AG04449 (cell line): ENCODE measurements at regions of chr9 and their contacts with region 1.

Region 1: DNA sequence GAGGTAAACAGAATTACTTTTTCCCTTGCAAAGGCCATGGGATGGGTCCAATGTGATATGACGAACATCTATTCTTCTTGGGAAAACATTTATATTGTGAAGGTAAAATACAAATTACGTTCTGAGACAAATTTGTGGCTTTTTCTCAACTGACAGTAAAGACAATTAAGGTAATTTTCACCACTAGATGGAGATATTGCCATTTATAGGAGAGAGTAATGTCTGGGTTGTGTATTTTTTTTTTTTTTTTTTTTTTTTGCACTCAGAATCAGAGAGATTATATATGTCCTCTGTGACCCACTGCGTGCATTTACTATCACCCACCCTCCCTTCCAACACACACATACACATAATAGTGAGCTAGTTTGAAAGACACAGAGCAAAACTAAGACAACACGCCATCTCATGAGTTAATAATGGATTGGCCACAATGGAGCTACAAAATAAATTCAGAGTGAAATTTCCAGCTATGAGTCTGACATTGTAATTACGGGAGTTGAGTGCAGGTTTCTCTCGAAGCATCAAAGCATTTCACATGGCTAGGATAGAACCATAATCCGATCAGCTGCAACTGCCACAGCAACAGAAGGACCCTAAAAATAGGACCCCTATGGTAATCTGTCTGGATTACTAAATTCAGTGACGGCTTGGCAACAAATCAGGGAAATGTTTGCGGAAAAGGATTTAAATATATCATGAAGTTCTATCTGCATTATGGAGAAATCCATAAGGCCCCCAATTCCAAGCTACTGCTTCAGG is 49.2 kb downstream of the ANXA1 start:
- DNase-seq: no peak
- H3K4me3 ChIP-seq: no peak overlapping the region
- CTCF ChIP-seq: peak; percentile 12

Region 2: DNA sequence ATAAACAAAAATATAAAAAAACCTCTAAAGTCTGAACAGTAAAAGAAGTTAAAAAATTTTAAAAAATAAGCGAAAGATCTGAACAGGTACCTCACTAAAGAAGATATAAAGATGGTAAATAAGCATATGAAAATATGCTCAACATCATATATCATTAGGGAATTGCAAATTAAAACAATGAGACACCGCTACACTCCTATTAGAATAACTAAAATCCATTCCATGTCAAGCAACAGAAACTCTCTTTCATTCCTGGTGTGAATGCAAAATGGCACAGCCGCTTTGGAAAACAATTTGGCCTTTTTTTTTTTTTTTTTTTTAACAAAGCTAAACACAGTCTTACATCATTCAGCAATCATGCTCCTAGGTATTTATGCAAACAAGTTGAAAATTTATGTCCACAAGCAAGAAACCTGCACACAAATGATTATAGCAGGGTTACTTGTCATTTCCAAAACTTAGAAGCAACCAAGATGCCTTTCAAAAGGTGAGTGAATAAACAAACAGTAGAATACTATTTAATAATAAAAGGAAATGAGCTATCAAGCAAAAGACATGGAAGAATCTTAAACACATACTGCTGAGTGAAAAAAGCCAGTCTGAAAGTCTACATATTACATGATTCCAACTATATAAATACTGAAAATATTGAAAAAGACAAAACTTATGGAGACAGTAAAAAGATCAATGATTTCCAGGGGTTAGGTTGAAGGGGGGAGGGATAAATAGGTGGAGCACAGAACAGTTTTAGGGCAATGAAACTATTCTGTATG is 27.1 kb before region 1 on chr9:
- CTCF ChIA-PET with region 1: no interaction called
- POLR2A ChIA-PET with region 1: no interaction called
- DNase-seq: no peak
- H3K4me3 ChIP-seq: no peak overlapping the region
- CTCF ChIP-seq: no peak

Region 3: DNA sequence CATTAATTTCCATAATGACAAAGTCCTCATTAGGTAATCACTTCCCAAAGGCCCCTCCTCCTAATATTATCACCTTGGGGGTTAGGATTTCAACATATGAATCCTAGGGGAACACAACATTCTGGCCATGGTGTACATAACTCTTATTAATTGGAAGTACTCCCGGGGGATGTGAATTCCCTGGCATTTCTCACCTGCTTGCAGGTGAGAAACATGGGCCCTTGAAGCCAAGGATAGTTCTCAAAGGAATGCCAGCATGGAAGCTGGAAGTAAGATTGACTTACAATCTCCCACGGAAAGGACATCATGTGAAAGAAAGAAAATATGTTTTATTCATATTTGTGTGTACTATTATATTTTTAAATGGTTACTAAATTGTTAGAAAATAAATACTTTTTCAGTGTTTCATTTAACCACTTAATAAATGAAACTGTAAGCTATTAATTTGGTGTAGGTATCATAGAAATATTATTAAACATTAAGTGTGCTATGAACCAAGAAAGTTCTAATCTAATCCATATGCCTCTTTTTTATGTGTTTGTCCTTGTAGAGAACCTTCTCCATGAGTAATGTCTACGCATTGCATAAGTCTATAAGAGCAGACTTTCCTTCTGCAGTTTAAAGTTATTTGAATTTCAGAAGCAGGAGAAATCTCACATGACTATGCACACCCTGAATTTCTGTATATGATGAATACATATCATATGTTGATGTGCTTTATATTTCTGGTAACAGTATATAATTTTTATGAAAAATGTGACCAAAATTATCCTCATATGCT is 10.2 kb after region 1 on chr9:
- CTCF ChIA-PET with region 1: interaction called, 11 read pairs
- POLR2A ChIA-PET with region 1: no interaction called
- DNase-seq: no peak
- H3K4me3 ChIP-seq: no peak overlapping the region
- CTCF ChIP-seq: no peak

Region 4: DNA sequence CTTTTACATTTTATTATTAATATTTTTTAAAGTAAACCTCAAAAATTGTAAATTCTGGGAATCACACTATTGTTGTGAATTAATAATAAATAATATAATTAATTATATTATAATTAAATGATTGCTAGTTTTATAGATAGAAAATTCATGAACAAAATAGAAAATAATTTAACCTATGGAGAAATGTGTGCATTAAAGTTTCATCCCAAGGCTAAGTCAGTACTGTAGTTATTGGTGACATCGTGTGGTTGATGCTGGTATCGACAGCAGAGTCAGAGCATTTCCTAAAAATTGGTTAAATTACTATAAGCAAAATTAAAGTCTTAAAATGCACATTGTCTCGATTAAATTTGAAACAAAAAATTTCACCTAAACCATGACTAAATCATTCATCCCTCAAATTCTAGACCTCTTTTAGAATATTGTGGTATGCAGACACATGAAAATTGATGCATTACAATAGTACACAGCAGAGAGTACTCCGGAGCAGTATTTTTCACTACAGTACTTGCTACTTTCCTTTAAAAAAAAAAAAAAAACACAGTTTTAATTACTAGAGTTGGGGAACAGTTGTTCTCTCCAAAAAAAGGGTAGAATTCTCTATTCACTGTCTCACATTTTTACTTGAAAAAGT is 1370.1 kb after region 1 on chr9:
- CTCF ChIA-PET with region 1: interaction called, 50 read pairs
- POLR2A ChIA-PET with region 1: no interaction called
- DNase-seq: no peak
- H3K4me3 ChIP-seq: no peak overlapping the region
- CTCF ChIP-seq: peak; percentile 55